Activated CD4-positive, alpha-beta T cell treated with anti-CD3 and anti-CD28 coated beads for 36 hours (primary cell): ENCODE measurements at regions of chr14 and their contacts with region 1.

Region 1: GRCh38 chr14:95534299-95535225 is at the start of gene GLRX5:
- DNase-seq: peak; percentile 98
- ATAC-seq: peak; percentile 94
- H3K4me3 Mint-ChIP-seq: peak within 1 kb of the TSS; percentile 93
- H3K27ac Mint-ChIP-seq: peak within 1 kb of the TSS; percentile 94
- H3K4me1 Mint-ChIP-seq: peaks cover 60% of the 10 kb centered on the region
- H3K27me3 Mint-ChIP-seq: no peaks in the 10 kb centered on the region
- total RNA-seq, gene GLRX5: 37.9 to 44.1 TPM

Region 2: GRCh38 chr14:94571950-94572349 is 962.6 kb before region 1 on chr14:
- CTCF ChIA-PET with region 1: no interaction called
- POLR2A ChIA-PET with region 1: no interaction called
- intact Hi-C with region 1: no loop called
- DNase-seq: no peak
- ATAC-seq: no peak
- H3K4me3 Mint-ChIP-seq: no peak overlapping the region
- H3K27ac Mint-ChIP-seq: no peak overlapping the region
- H3K4me1 Mint-ChIP-seq: no peaks in the 10 kb centered on the region
- H3K27me3 Mint-ChIP-seq: no peaks in the 10 kb centered on the region

Region 3: GRCh38 chr14:95319312-95320021 is 215.1 kb before region 1 on chr14 and contains the start of gene CLMN:
- CTCF ChIA-PET with region 1: no interaction called
- POLR2A ChIA-PET with region 1: no interaction called
- intact Hi-C with region 1: loop called (anchors 2 to 10 kb)
- DNase-seq: peak; percentile 48
- ATAC-seq: peak; percentile 65
- H3K4me3 Mint-ChIP-seq: peak within 1 kb of the TSS; percentile 64
- H3K27ac Mint-ChIP-seq: peak within 1 kb of the TSS; percentile 29
- H3K4me1 Mint-ChIP-seq: peaks cover 14% of the 10 kb centered on the region
- H3K27me3 Mint-ChIP-seq: peaks cover 42% of the 10 kb centered on the region
- total RNA-seq, gene CLMN: 0.75 to 1.5 TPM

Region 4: GRCh38 chr14:95442633-95443021 is 91.9 kb before region 1 on chr14:
- CTCF ChIA-PET with region 1: interaction called, 88 read pairs
- POLR2A ChIA-PET with region 1: no interaction called
- intact Hi-C with region 1: loop called (anchors 1 to 2 kb)
- DNase-seq: peak; percentile 87
- ATAC-seq: peak; percentile 98
- H3K4me3 Mint-ChIP-seq: no peak overlapping the region
- H3K27ac Mint-ChIP-seq: peak overlapping the region; percentile 82
- H3K4me1 Mint-ChIP-seq: peaks cover 4% of the 10 kb centered on the region
- H3K27me3 Mint-ChIP-seq: no peaks in the 10 kb centered on the region

Region 5: GRCh38 chr14:95495538-95496025 is 39.0 kb before region 1 on chr14:
- CTCF ChIA-PET with region 1: interaction called, 6 read pairs
- POLR2A ChIA-PET with region 1: interaction called, 3 read pairs
- intact Hi-C with region 1: loop called (anchors 1 to 5 kb)
- DNase-seq: peak; percentile 49
- ATAC-seq: peak; percentile 78
- H3K4me3 Mint-ChIP-seq: peak overlapping the region; percentile 8
- H3K27ac Mint-ChIP-seq: peak overlapping the region; percentile 76
- H3K4me1 Mint-ChIP-seq: peaks cover 66% of the 10 kb centered on the region
- H3K27me3 Mint-ChIP-seq: no peaks in the 10 kb centered on the region

Region 6: DNA sequence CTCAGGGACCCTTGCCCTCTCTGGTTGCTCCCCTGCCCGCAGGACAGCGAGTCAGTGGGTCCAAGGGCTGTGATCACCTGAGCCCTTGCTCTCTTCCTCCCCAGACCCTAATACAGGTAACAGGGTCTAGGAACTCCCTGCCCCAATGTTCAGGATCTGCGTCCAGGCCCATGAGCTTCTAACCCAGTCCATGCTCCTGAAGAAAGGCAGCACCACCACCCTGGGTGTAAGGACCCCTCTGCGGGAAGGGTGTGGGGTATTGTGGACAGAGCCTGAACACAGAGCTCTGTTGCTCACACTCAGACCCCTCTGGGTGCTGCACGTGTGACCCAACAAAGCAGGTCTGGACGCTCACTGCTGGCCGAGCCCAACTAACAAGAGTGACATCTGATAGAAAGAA is 18.6 kb after region 1 on chr14:
- CTCF ChIA-PET with region 1: no interaction called
- POLR2A ChIA-PET with region 1: no interaction called
- intact Hi-C with region 1: no loop called
- DNase-seq: no peak
- ATAC-seq: no peak
- H3K4me3 Mint-ChIP-seq: no peak overlapping the region
- H3K27ac Mint-ChIP-seq: no peak overlapping the region
- H3K4me1 Mint-ChIP-seq: no peaks in the 10 kb centered on the region
- H3K27me3 Mint-ChIP-seq: no peaks in the 10 kb centered on the region

Region 7: DNA sequence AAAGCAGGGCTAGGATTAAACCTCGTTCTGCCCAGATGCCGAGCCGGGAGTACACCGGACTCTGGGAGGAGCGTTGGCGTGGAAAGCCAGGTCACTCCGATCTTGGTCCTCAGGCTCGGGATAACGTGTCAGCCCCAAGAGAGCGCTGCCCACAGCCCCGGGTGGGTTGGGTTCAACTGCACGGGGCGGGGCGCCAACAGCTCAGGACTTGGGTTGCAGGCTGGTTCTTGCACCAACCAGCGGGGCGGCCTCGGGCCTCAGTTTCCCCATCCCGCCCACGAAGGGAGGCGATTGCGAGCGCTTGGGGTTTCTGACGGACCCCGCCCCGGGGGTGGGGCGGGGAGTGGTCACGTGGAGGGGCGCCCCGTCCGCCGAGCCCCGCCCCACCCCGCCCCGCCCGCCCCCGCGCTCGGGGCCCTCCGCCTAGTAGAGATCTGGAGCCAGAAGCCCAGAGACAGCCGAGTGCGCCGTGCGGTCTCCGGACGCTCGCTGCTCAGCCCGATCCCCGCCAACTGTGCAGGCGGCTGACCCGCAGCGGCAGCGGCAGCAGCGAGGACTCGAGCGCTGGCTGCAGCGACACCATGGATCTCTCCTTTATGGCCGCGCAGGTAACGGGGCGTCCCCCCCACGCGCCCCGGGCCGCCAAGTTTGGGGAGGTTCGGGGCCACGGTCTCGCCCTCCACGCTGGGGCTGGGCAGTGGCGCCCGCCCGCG is 504.5 kb after region 1 on chr14 and contains the start of gene C14orf132:
- CTCF ChIA-PET with region 1: no interaction called
- POLR2A ChIA-PET with region 1: no interaction called
- intact Hi-C with region 1: loop called in 1 of 2 experiments (anchors 1 kb)
- DNase-seq: peak; percentile 86
- ATAC-seq: peak; percentile 90
- H3K4me3 Mint-ChIP-seq: peak within 1 kb of the TSS; percentile 76
- H3K27ac Mint-ChIP-seq: peak within 1 kb of the TSS; percentile 63
- H3K4me1 Mint-ChIP-seq: peaks cover 15% of the 10 kb centered on the region
- H3K27me3 Mint-ChIP-seq: peaks cover 20% of the 10 kb centered on the region
- total RNA-seq, gene C14orf132: 4.1 to 4.3 TPM

Region 8: GRCh38 chr14:96391293-96392118 is 856.9 kb after region 1 on chr14:
- CTCF ChIA-PET with region 1: no interaction called
- POLR2A ChIA-PET with region 1: no interaction called
- intact Hi-C with region 1: loop called in 1 of 2 experiments (anchors 1 kb)
- DNase-seq: peak; percentile 100
- ATAC-seq: peak; percentile 97
- H3K4me3 Mint-ChIP-seq: peak overlapping the region; percentile 85
- H3K27ac Mint-ChIP-seq: peak overlapping the region; percentile 84
- H3K4me1 Mint-ChIP-seq: peaks cover 8% of the 10 kb centered on the region
- H3K27me3 Mint-ChIP-seq: peaks cover 8% of the 10 kb centered on the region

Region 9: DNA sequence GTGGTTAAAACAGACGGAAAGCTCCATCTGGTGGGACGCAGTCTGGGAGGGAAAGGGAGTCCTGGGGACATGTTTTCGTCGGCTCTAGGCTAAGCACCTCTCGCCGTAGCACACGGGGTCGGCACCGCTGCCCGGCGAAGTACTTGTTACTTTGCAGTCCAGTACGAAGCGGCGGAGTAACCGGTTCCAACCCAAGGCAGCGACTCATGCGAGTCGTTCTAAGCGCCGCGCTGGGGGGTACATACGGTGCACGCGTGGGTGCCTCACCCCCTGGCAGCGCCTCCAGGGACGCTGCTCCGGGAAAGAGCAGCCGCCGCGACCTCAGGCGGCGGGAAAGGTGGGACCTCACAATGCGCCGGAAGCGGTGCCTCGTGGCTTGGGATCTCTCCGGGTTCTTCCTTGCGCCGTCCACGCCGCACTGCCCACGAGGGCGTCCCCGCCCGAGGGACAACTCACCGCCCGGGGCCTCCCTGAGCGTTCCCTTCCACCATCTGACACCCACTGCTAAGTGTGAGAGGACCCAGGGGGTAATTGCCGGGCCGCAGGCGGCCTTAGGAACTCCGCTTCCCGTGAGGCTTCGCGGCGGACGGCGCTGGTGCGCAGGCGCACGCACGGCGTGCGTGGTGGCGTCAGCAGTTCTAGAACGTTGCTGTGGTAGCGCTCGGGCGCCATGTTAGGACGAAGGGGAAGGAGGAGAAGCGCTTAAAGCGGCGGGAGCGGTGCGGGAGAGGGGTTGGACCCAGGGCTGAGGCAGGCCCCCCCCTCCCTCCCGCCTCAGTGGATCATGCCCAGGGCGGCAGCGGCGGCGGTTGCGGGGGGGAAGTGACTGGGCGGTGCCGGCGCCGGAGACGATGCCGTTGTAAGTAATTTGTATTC is 967.4 kb after region 1 on chr14 and contains the start of gene PAPOLA:
- CTCF ChIA-PET with region 1: no interaction called
- POLR2A ChIA-PET with region 1: no interaction called
- intact Hi-C with region 1: loop called in 1 of 2 experiments (anchors 5 kb)
- DNase-seq: peak; percentile 96
- ATAC-seq: peak; percentile 95
- H3K4me3 Mint-ChIP-seq: peak within 1 kb of the TSS; percentile 99
- H3K27ac Mint-ChIP-seq: peak within 1 kb of the TSS; percentile 98
- H3K4me1 Mint-ChIP-seq: peaks cover 31% of the 10 kb centered on the region
- H3K27me3 Mint-ChIP-seq: peaks cover 6% of the 10 kb centered on the region
- total RNA-seq, gene PAPOLA: 190 to 205 TPM